Gastrocnemius medialis (tissue), 4 donors: ENCODE measurements at regions of chr11 and their contacts with region 1.

Region 1: GRCh38 chr11:10307442-10308207 is 2.8 kb downstream of the ADM start:
- DNase-seq: peak; percentile 83 to 88
- ATAC-seq: peak; percentile 33 to 41
- H3K4me3 ChIP-seq: peak overlapping the region; percentile 77 to 92 (median 88)
- H3K27ac ChIP-seq: peak overlapping the region; percentile 85 to 93 (median 89)
- H3K4me1 ChIP-seq: peaks cover 46 to 60% of the 10 kb centered on the region in 2 donors
- H3K27me3 ChIP-seq: peaks cover 0 to 5% (median 0%) of the 10 kb centered on the region in 3 donors
- CTCF ChIP-seq: peak; percentile 100
- POLR2A ChIP-seq: peak; percentile 29 to 41

Region 2: GRCh38 chr11:9613118-9613829 is 694.4 kb before region 1 on chr11:
- in situ Hi-C with region 1: no loop called
- intact Hi-C with region 1: loop called (anchors 10 kb)
- DNase-seq: peak; percentile 88 to 92
- ATAC-seq: peak; percentile 92
- H3K4me3 ChIP-seq: peak overlapping the region; percentile 46 to 66 (median 64)
- H3K27ac ChIP-seq: peak overlapping the region; percentile 86 to 96 (median 89)
- H3K4me1 ChIP-seq: peaks cover 0 to 16% of the 10 kb centered on the region in 2 donors
- H3K27me3 ChIP-seq: no peaks in the 10 kb centered on the region
- CTCF ChIP-seq: peak; percentile 79 to 94 (median 90)
- POLR2A ChIP-seq: peak; percentile 53 to 68

Region 3: GRCh38 chr11:9861860-9862725 is 445.5 kb before region 1 on chr11:
- in situ Hi-C with region 1: loop called in 2 of 4 experiments (anchors 25 kb)
- intact Hi-C with region 1: loop called (anchors 5 kb)
- DNase-seq: peak; percentile 6 to 36
- ATAC-seq: peak; percentile 75 to 87
- H3K4me3 ChIP-seq: no peak overlapping the region
- H3K27ac ChIP-seq: no peak overlapping the region
- H3K4me1 ChIP-seq: no peaks in the 10 kb centered on the region
- H3K27me3 ChIP-seq: no peaks in the 10 kb centered on the region
- CTCF ChIP-seq: peak; percentile 50 to 74 (median 57)
- POLR2A ChIP-seq: no peak

Region 4: GRCh38 chr11:10122326-10123197 is 185.1 kb before region 1 on chr11:
- in situ Hi-C with region 1: loop called in 1 of 4 experiments (anchors 25 kb)
- intact Hi-C with region 1: loop called (anchors 5 kb)
- DNase-seq: no peak
- ATAC-seq: no peak
- H3K4me3 ChIP-seq: no peak overlapping the region
- H3K27ac ChIP-seq: peak overlapping the region in 2 of 4 donors; percentile 19 to 35
- H3K4me1 ChIP-seq: peaks cover 21 to 48% of the 10 kb centered on the region in 2 donors
- H3K27me3 ChIP-seq: no peaks in the 10 kb centered on the region
- CTCF ChIP-seq: no peak
- POLR2A ChIP-seq: no peak

Region 5: GRCh38 chr11:10351768-10352641 is 44.4 kb after region 1 on chr11:
- in situ Hi-C with region 1: no loop called
- intact Hi-C with region 1: loop called (anchors 1 kb)
- DNase-seq: peak; percentile 50 to 68
- ATAC-seq: peak; percentile 81 to 92
- H3K4me3 ChIP-seq: no peak overlapping the region
- H3K27ac ChIP-seq: peak overlapping the region; percentile 73 to 77 (median 75)
- H3K4me1 ChIP-seq: peaks cover 33 to 55% of the 10 kb centered on the region in 2 donors
- H3K27me3 ChIP-seq: no peaks in the 10 kb centered on the region
- CTCF ChIP-seq: no peak
- POLR2A ChIP-seq: peak in 1 of 2 donors; percentile 25

Region 6: GRCh38 chr11:10414659-10415058 is 107.0 kb after region 1 on chr11:
- in situ Hi-C with region 1: no loop called
- intact Hi-C with region 1: no loop called
- DNase-seq: peak in 1 of 2 donors; percentile 60
- ATAC-seq: no peak
- H3K4me3 ChIP-seq: no peak overlapping the region
- H3K27ac ChIP-seq: peak overlapping the region in 1 of 4 donors; percentile 41
- H3K4me1 ChIP-seq: peaks cover 21% of the 10 kb centered on the region in 2 donors
- H3K27me3 ChIP-seq: no peaks in the 10 kb centered on the region
- CTCF ChIP-seq: no peak
- POLR2A ChIP-seq: no peak

Region 7: DNA sequence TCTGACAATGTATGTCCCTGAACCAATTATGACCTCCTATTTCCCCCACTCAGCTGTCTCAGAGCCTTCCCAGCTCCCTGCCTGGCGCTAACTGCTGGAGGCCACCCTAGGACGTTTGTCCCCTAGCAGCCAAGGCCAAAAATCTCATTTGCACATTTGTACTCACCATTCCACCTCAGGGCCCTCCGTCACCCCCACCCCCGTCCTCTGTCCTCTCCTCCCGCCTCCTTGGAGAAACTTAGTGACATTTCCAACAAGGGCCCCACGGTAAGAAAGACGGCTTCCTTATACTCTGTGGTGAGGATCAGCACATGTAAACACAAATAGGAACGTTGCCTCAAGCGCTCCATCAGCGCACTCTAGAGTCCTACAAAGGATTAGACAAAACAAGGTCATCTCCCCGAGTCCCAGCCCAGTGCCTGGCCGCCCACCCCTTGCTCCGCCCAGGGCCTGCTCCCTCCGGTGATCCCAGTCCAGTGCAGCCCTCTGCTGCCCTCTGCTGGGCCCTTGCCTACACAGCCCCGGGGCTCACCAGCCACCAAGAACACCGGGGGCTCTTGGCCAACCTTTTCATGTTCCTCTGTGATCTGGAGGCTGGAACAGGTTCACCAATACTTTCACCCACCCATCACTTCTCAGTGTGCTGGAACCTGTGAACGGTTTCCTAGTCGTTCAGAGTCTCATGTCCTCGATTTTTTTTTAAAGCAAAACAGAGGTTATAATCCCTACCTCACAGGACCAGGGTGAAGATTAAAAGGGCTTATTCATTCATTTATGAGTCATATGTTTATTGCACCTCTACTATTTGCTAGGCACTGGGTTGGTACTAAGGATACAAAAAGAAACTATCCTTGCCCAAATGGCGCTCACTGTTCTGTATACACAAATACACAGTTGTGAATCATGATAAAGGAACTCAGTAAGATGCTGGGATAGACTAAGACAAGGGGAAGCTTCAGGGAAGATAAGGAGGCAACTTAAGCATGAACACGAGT is 428.2 kb after region 1 on chr11:
- in situ Hi-C with region 1: no loop called
- intact Hi-C with region 1: loop called (anchors 10 kb)
- DNase-seq: peak; percentile 92 to 94
- ATAC-seq: peak; percentile 94 to 95
- H3K4me3 ChIP-seq: peak overlapping the region in 3 of 4 donors; percentile 19 to 35 (median 30)
- H3K27ac ChIP-seq: peak overlapping the region; percentile 76 to 81 (median 80)
- H3K4me1 ChIP-seq: peaks cover 15 to 20% of the 10 kb centered on the region in 2 donors
- H3K27me3 ChIP-seq: no peaks in the 10 kb centered on the region
- CTCF ChIP-seq: peak; percentile 97 to 99 (median 98)
- POLR2A ChIP-seq: no peak